ENCODE measurements at regions of chr14 and their contacts with region 1.

Region 1: DNA sequence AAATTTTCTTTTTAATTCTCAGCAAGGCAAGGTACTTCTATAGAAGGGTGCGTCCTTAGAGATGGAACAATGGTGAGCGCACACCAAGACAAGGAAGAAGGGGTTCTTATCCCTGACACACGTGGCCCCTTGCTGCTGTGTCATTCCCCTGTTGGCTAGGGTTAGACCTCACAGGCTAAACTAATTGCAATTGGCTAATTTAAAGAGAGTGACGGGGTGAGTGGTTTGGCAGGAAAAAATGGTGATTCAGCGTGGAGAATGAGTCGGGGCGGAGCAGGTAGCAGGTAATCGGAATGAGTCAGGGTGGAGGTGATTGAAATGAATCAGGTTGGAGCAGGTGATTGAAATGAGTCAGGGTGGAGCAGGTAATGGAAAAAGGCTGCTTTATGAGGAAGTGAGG is 36.3 kb upstream of the HECTD1 start:
- DNase-seq: peak; percentile 88
- H3K4me3 Mint-ChIP-seq: peak overlapping the region; percentile 47
- H3K27ac Mint-ChIP-seq: peak overlapping the region; percentile 97
- H3K4me1 Mint-ChIP-seq: peaks cover 32% of the 10 kb centered on the region
- H3K27me3 Mint-ChIP-seq: no peaks in the 10 kb centered on the region
- CTCF ChIP-seq: no peak

Region 2: GRCh38 chr14:31229638-31230229 is 14.1 kb before region 1 on chr14:
- CTCF ChIA-PET with region 1: no interaction called
- intact Hi-C with region 1: loop called (anchors 2 kb)
- DNase-seq: peak; percentile 81
- H3K4me3 Mint-ChIP-seq: peak overlapping the region; percentile 14
- H3K27ac Mint-ChIP-seq: peak overlapping the region; percentile 91
- H3K4me1 Mint-ChIP-seq: peaks cover 17% of the 10 kb centered on the region
- H3K27me3 Mint-ChIP-seq: no peaks in the 10 kb centered on the region
- CTCF ChIP-seq: no peak

Region 3: DNA sequence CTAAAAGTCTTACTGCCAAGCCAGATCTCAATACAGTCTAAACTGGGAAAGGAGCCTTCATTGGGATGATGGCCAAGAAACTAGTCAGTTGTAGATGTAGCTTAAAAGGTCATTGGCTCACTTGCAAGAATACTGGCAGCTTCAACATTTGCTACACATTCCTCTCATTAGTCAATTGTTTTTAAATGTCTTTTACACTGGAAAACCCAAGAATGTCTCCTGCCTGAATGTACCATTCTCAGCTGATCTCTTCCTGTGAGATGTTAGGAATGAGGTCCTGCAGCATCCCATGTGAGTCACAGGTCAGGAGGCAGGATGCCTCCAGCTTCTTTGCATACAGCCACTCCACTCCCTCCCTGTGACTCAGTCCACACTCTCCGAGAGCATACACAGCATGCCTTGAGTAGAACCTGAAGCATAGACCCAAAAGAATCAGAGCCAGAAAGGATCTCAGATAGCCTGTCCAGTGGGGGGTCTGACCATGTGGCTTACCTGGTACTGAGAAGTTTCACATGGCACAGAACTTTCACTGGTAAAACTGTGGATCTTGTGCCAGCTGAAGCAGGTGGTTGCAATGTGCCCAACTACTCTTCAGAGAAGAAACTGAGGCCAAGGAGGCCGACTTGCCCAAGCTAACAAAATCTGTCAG is 19.7 kb after region 1 on chr14:
- CTCF ChIA-PET with region 1: interaction called, 3 read pairs
- intact Hi-C with region 1: loop called (anchors 2 kb)
- DNase-seq: peak; percentile 83
- H3K4me3 Mint-ChIP-seq: peak overlapping the region; percentile 2
- H3K27ac Mint-ChIP-seq: peak overlapping the region; percentile 83
- H3K4me1 Mint-ChIP-seq: peaks cover 34% of the 10 kb centered on the region
- H3K27me3 Mint-ChIP-seq: no peaks in the 10 kb centered on the region
- CTCF ChIP-seq: no peak

Region 4: DNA sequence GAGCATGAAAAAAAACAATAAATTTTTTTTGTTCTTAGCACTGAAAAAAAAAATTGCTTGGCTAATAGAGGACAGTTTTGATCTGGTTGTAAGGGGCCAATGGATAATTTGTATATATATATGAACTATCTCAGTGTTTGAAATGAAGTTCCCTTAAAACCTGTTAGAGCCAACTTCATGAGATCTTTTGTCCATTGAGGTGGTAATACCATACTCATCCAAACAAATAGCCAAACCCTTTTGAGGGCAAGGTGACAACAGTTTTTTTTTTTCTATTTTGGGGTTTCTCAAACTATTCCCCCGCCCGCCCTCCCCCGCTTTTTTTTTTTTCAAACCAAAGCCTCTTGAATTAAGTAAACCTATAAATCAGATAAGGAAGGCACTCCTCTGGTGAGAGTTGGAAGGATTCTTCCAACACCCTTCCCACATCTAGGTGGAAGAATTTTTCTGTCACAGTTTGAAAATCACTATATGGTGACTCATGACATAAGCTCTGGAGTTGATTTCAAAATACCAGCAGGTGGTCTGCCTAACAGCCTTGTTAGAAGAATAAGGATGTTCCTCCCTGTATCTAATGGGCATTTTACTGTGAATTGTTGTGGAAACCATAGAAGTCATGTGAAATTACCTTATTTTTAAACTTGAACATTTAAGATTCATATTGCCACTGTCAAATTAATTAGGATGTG is 843.5 kb after region 1 on chr14:
- CTCF ChIA-PET with region 1: no interaction called
- intact Hi-C with region 1: no loop called
- DNase-seq: no peak
- H3K4me3 Mint-ChIP-seq: no peak overlapping the region
- H3K27ac Mint-ChIP-seq: no peak overlapping the region
- H3K4me1 Mint-ChIP-seq: peaks cover 41% of the 10 kb centered on the region
- H3K27me3 Mint-ChIP-seq: no peaks in the 10 kb centered on the region
- CTCF ChIP-seq: no peak

Measured in Calu3 (cell line).